ENCODE measurements at regions of chr4 and their contacts with region 1.

Region 1: DNA sequence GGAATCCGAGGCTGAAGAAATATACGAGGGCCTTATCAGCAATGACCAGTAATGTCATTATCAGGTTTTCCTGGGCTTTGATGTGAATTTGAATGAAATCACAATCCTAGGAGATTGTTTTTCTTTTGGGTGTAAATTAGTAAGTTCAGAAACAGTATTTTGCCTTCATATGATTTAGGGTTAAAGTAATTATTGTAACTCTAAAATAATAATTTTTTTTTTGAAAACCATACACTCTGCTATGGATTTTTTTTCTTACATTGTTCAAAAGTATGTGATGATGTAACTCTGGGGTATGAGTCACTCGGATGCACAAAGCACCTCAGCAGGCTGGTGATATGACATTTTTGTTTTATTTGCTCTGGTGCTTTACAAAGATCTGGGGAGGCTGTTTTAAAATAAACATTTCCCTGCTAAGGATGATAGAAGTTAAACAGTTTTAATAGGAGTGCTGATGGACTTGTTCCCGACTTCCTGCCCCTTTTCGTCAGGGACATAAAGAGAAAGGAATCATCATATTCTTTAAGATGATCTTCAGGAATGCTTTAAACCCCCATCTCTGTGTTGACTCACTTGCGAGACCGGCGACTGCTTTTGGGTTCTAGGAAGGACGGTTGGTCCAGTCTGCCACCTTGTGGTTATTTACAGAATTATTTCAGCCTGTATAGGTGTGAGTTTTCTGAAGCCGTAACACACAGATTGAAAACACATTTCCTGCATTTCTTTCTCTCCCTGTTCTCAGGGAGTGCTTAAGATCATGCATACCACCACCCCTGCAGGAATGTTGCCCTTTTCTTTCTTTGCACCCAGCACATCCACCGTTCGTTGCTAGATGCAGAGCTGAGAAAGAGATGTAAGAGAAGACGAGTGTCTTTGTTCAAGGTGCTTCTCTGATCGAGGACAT is 72.5 kb downstream of the RAPGEF2 start:
- DNase-seq: peak; percentile 83
- ATAC-seq: peak; percentile 83
- H3K4me3 ChIP-seq: no peak overlapping the region
- H3K4me3 Mint-ChIP-seq: no peak overlapping the region
- H3K27ac ChIP-seq: no peak overlapping the region
- H3K27ac Mint-ChIP-seq: no peak overlapping the region
- H3K4me1 ChIP-seq: peaks cover 31 to 42% of the 10 kb centered on the region in 2 donors
- H3K4me1 Mint-ChIP-seq: peaks cover 70% of the 10 kb centered on the region
- H3K27me3 ChIP-seq: peaks cover 0 to 9% (median 6%) of the 10 kb centered on the region in 4 experiments
- H3K27me3 Mint-ChIP-seq: peaks cover 27% of the 10 kb centered on the region
- CTCF ChIP-seq: peak; percentile 83

Region 2: DNA sequence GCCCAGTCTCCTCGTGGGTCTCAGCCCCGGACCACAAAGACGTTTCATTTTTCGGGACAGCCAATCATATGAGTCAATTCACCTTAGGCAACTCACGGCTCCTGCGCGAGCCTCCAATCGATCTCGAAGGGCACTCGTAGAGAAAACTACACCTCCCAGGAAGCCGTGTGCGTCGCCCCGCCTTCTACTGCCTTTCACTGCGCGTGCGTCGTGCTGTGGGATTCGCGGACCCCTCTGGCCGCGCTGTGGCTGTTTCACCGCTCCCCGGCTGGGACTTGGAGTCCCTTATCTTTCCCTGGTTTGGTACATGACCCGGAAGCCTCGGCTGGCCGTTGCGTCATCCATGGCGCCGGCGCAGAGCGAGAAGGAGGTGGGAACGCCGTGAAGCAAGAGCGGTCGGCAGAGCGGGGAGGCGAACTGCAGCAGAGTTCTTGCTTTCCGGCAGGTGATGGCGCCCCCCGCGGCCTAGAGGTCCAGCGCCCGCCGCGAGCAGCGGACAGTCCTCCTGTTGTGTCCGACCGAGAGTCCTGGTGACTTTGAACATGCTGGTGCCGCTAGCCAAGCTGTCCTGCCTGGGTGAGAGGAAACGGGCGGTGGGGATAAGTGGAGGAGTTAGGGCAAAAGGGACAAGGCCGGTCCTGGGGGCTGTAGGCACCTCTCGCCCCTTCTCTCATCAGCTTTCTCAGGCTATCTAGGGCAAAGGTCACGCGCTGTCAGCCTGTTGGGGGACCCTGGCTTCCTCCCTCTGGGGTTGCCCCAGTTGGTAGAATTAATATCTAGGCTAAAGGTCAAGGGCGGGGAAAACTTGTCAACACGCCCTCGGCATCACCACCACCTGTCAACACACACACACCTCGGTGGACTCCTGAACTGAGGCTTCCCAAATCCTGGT is 503.2 kb before region 1 on chr4 and contains the start of gene ETFDH:
- CTCF ChIA-PET with region 1: no interaction called
- POLR2A ChIA-PET with region 1: no interaction called
- intact Hi-C with region 1: loop called (anchors 5 kb)
- DNase-seq: peak; percentile 100
- ATAC-seq: peak; percentile 80
- H3K4me3 ChIP-seq: peak within 1 kb of the TSS; percentile 73 to 96 (median 77)
- H3K4me3 Mint-ChIP-seq: peak within 1 kb of the TSS; percentile 90
- H3K27ac ChIP-seq: peak within 1 kb of the TSS; percentile 93 to 97
- H3K27ac Mint-ChIP-seq: peak within 1 kb of the TSS; percentile 95
- H3K4me1 ChIP-seq: peaks cover 12 to 13% of the 10 kb centered on the region in 2 donors
- H3K4me1 Mint-ChIP-seq: peaks cover 22% of the 10 kb centered on the region
- H3K27me3 ChIP-seq: no peaks in the 10 kb centered on the region
- H3K27me3 Mint-ChIP-seq: no peaks in the 10 kb centered on the region
- CTCF ChIP-seq: peak; percentile 68
- total RNA-seq, gene ETFDH: 8.8 and 10.8 TPM in 2 replicates

Region 3: DNA sequence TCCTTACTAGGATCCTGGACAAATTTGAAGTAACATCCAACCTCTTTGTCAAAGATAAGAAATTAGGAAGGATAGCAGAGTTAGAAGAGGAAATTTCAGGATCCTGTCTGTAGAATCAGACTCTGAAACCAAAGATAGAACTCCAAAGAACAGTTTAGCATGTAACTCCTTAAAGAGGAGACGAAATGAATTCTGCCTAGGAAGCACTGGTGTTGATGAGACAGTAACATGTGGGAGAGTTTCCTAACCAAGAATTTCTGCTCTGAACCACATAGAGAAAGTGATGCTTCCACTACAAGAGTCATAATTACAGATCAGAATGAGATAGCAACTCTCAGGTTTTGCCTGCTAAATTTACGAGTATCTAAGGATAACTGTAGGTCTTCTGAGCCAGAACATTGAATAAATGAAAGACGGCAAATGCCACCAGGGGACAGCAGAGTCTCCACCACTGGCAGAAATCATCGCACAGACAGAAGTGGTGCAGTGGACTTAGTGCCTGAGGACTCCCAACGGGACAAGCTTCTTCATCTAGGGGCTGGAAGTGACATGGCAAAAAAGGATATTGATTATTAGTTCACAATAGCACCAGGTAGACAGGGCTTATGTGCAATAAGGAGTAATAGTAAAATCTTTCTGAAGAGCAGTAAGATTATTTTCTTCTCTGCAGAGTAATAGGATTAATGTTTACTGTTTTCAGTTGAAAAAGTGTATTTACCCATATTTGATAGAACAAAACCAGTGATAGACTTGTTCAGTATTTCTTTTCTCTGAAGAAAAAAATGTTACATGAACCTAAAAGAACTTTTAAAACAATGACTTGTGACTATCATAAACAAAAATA is 445.4 kb before region 1 on chr4:
- CTCF ChIA-PET with region 1: no interaction called
- POLR2A ChIA-PET with region 1: no interaction called
- intact Hi-C with region 1: loop called (anchors 2 kb)
- DNase-seq: peak; percentile 58
- ATAC-seq: no peak
- H3K4me3 ChIP-seq: no peak overlapping the region
- H3K4me3 Mint-ChIP-seq: no peak overlapping the region
- H3K27ac ChIP-seq: no peak overlapping the region
- H3K27ac Mint-ChIP-seq: no peak overlapping the region
- H3K4me1 ChIP-seq: no peaks in the 10 kb centered on the region
- H3K4me1 Mint-ChIP-seq: no peaks in the 10 kb centered on the region
- H3K27me3 ChIP-seq: peaks cover 0 to 37% (median 30%) of the 10 kb centered on the region in 4 experiments
- H3K27me3 Mint-ChIP-seq: peaks cover 64% of the 10 kb centered on the region
- CTCF ChIP-seq: peak; percentile 74

Region 4: GRCh38 chr4:158768555-158769174 is 406.7 kb before region 1 on chr4 and contains the start of gene FNIP2:
- CTCF ChIA-PET with region 1: no interaction called
- POLR2A ChIA-PET with region 1: no interaction called
- intact Hi-C with region 1: no loop called
- DNase-seq: peak; percentile 69
- ATAC-seq: peak; percentile 70
- H3K4me3 ChIP-seq: peak within 1 kb of the TSS; percentile 30 to 53 (median 44)
- H3K4me3 Mint-ChIP-seq: peak within 1 kb of the TSS; percentile 89
- H3K27ac ChIP-seq: no peak within 1 kb of the TSS
- H3K27ac Mint-ChIP-seq: peak within 1 kb of the TSS; percentile 32
- H3K4me1 ChIP-seq: peaks cover 12 to 22% of the 10 kb centered on the region in 2 donors
- H3K4me1 Mint-ChIP-seq: peaks cover 8% of the 10 kb centered on the region
- H3K27me3 ChIP-seq: peaks cover 8 to 68% (median 67%) of the 10 kb centered on the region in 4 experiments
- H3K27me3 Mint-ChIP-seq: peaks cover 76% of the 10 kb centered on the region
- CTCF ChIP-seq: no peak
- total RNA-seq, gene FNIP2: 0.17 and 0.39 TPM in 2 replicates

Region 5: DNA sequence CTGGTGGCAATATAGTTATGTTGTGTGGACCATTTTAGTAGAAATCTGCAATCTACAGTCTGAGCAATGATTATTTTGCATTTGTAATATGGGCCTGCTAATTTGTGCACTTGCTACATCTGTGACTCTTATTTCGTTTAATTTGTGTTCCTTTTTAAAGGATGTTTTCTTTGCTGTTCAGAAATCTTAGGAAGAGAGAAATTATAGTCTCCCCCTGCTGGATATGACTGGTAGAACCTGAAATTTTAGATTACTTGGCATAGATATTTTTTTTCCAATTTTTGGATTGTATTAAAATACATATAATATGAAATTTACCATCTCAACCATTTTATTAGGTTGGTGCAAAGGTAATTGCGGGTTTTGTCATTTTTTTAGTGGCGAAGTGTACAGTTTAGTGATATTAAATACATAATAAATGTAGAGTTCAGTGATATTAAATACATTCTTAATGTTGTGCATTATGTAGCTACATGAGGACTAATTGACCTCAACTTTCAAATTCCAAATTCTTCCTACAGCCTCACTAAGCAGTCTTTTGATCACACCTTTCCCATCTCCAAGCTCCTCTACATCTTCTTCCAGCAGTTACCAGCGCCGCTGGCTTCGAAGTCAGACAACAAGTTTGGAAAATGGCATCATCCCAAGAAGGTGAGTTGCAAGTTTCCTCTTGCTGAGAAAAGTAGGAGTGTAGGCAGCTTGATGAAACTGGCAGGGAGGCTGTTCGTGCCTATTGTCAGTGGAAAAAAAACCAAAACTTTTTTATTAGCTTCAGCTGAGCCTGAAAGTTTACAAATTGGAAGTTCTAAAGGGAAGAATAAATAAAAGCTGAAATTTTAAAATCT is 324.3 kb before region 1 on chr4:
- CTCF ChIA-PET with region 1: interaction called, 65 read pairs
- POLR2A ChIA-PET with region 1: no interaction called
- intact Hi-C with region 1: no loop called
- DNase-seq: peak; percentile 44
- ATAC-seq: no peak
- H3K4me3 ChIP-seq: no peak overlapping the region
- H3K4me3 Mint-ChIP-seq: no peak overlapping the region
- H3K27ac ChIP-seq: no peak overlapping the region
- H3K27ac Mint-ChIP-seq: no peak overlapping the region
- H3K4me1 ChIP-seq: no peaks in the 10 kb centered on the region
- H3K4me1 Mint-ChIP-seq: no peaks in the 10 kb centered on the region
- H3K27me3 ChIP-seq: peaks cover 0 to 29% (median 19%) of the 10 kb centered on the region in 4 experiments
- H3K27me3 Mint-ChIP-seq: peaks cover 24% of the 10 kb centered on the region
- CTCF ChIP-seq: peak; percentile 89

Region 6: GRCh38 chr4:158856852-158857251 is 318.5 kb before region 1 on chr4:
- CTCF ChIA-PET with region 1: interaction called, 65 read pairs
- POLR2A ChIA-PET with region 1: no interaction called
- intact Hi-C with region 1: loop called (anchors 1 kb)
- DNase-seq: peak; percentile 63
- ATAC-seq: peak; percentile 65
- H3K4me3 ChIP-seq: no peak overlapping the region
- H3K4me3 Mint-ChIP-seq: no peak overlapping the region
- H3K27ac ChIP-seq: no peak overlapping the region
- H3K27ac Mint-ChIP-seq: no peak overlapping the region
- H3K4me1 ChIP-seq: no peaks in the 10 kb centered on the region
- H3K4me1 Mint-ChIP-seq: peaks cover 3% of the 10 kb centered on the region
- H3K27me3 ChIP-seq: peaks cover 0 to 4% (median 3%) of the 10 kb centered on the region in 4 experiments
- H3K27me3 Mint-ChIP-seq: peaks cover 13% of the 10 kb centered on the region
- CTCF ChIP-seq: peak; percentile 76

Region 7: GRCh38 chr4:159077702-159078495 is 97.4 kb before region 1 on chr4:
- CTCF ChIA-PET with region 1: no interaction called
- POLR2A ChIA-PET with region 1: no interaction called
- intact Hi-C with region 1: no loop called
- DNase-seq: peak; percentile 70
- ATAC-seq: peak; percentile 79
- H3K4me3 ChIP-seq: peak overlapping the region in 4 of 5 experiments; percentile 2 to 52 (median 20)
- H3K4me3 Mint-ChIP-seq: peak overlapping the region; percentile 30
- H3K27ac ChIP-seq: peak overlapping the region; percentile 43 to 58
- H3K27ac Mint-ChIP-seq: peak overlapping the region; percentile 63
- H3K4me1 ChIP-seq: peaks cover 13 to 14% of the 10 kb centered on the region in 2 donors
- H3K4me1 Mint-ChIP-seq: peaks cover 13% of the 10 kb centered on the region
- H3K27me3 ChIP-seq: peaks cover 0 to 2% (median 0%) of the 10 kb centered on the region in 4 experiments
- H3K27me3 Mint-ChIP-seq: no peaks in the 10 kb centered on the region
- CTCF ChIP-seq: no peak

Region 8: GRCh38 chr4:159102622-159103383 is 72.5 kb before region 1 on chr4 and contains the start of gene RAPGEF2:
- CTCF ChIA-PET with region 1: no interaction called
- POLR2A ChIA-PET with region 1: no interaction called
- intact Hi-C with region 1: loop called (anchors 5 kb)
- DNase-seq: peak; percentile 94
- ATAC-seq: peak; percentile 87
- H3K4me3 ChIP-seq: peak within 1 kb of the TSS; percentile 28 to 89 (median 81)
- H3K4me3 Mint-ChIP-seq: peak within 1 kb of the TSS; percentile 86
- H3K27ac ChIP-seq: peak within 1 kb of the TSS; percentile 78 to 85
- H3K27ac Mint-ChIP-seq: peak within 1 kb of the TSS; percentile 93
- H3K4me1 ChIP-seq: peaks cover 26 to 30% of the 10 kb centered on the region in 2 donors
- H3K4me1 Mint-ChIP-seq: peaks cover 41% of the 10 kb centered on the region
- H3K27me3 ChIP-seq: peaks cover 0 to 11% (median 0%) of the 10 kb centered on the region in 4 experiments
- H3K27me3 Mint-ChIP-seq: peaks cover 8% of the 10 kb centered on the region
- CTCF ChIP-seq: no peak
- total RNA-seq, gene RAPGEF2: 42.9 and 45.8 TPM in 2 replicates

Region 9: GRCh38 chr4:159150821-159151390 is 24.4 kb before region 1 on chr4:
- CTCF ChIA-PET with region 1: no interaction called
- POLR2A ChIA-PET with region 1: no interaction called
- intact Hi-C with region 1: no loop called
- DNase-seq: no peak
- ATAC-seq: no peak
- H3K4me3 ChIP-seq: no peak overlapping the region
- H3K4me3 Mint-ChIP-seq: no peak overlapping the region
- H3K27ac ChIP-seq: no peak overlapping the region
- H3K27ac Mint-ChIP-seq: no peak overlapping the region
- H3K4me1 ChIP-seq: peaks cover 8 to 16% of the 10 kb centered on the region in 2 donors
- H3K4me1 Mint-ChIP-seq: peaks cover 20% of the 10 kb centered on the region
- H3K27me3 ChIP-seq: no peaks in the 10 kb centered on the region
- H3K27me3 Mint-ChIP-seq: peaks cover 4% of the 10 kb centered on the region
- CTCF ChIP-seq: no peak

Region 10: DNA sequence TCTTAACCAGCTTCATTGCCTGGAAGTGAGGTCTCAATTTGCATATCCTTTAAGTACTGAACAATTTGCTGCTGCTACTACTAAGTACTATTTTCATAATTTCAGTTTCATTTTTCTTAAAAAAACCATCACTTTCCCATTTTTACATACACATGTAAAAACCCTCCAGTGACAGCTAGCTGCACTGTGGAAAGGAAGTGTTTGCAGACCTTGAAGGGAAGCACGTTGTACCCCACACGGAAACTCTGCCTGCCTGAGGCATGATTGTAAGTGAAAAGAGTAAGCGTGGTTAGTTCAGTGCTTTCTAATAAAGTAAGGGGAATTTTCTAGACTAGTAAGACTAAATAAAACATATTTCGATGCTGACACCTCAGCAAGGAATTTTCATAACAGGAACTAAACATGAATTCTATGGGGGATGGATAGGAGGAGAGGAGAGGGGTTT is 31.1 kb after region 1 on chr4:
- CTCF ChIA-PET with region 1: interaction called, 11 read pairs
- POLR2A ChIA-PET with region 1: no interaction called
- intact Hi-C with region 1: loop called (anchors 1 kb)
- DNase-seq: peak; percentile 35
- ATAC-seq: peak; percentile 41
- H3K4me3 ChIP-seq: peak overlapping the region in 1 of 5 experiments; percentile 47
- H3K4me3 Mint-ChIP-seq: peak overlapping the region; percentile 14
- H3K27ac ChIP-seq: no peak overlapping the region
- H3K27ac Mint-ChIP-seq: no peak overlapping the region
- H3K4me1 ChIP-seq: peaks cover 13 to 14% of the 10 kb centered on the region in 2 donors
- H3K4me1 Mint-ChIP-seq: peaks cover 16% of the 10 kb centered on the region
- H3K27me3 ChIP-seq: no peaks in the 10 kb centered on the region
- H3K27me3 Mint-ChIP-seq: no peaks in the 10 kb centered on the region
- CTCF ChIP-seq: no peak